Dorsolateral prefrontal cortex (tissue), 120 donors: ENCODE measurements at regions of chr6 and their contacts with region 1.

Region 1: DNA sequence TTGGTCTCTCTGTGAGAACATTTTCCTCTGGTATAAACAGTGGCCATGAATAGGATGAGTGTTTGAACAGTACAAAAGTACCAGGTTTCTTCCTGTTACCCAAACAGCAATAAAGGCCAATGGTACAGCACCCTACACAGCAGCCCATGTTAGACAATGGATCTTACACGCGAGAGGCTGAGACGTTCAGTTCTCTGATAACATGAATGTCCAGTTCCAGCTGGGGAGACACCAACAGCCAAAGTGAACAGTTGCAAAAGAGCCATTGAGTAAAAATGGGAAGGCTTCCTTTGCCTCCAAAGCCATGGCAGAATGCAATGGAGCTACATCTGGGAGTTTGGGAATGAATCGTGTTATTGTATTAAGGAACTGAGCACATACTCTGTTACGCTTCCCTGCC is 246.8 kb upstream of the SGK1 start:
- DNase-seq: peak; percentile 15 to 93 (median 75)
- H3K4me3 ChIP-seq: peak overlapping the region in 1 of 59 donors; percentile 30
- H3K27ac ChIP-seq: peak overlapping the region; percentile 49 to 100 (median 97)
- H3K27me3 ChIP-seq: no peaks in the 10 kb centered on the region
- CTCF ChIP-seq: peak in 3 of 56 donors; percentile 10 to 26 (median 19)

Region 2: GRCh38 chr6:134317471-134318131 is 247.1 kb before region 1 on chr6 and contains the start of gene SGK1:
- intact Hi-C with region 1: loop called (anchors 5 to 10 kb)
- DNase-seq: peak in 9 of 10 donors; percentile 41 to 70 (median 67)
- H3K4me3 ChIP-seq: peak within 1 kb of the TSS; percentile 57 to 95 (median 79)
- H3K27ac ChIP-seq: peak within 1 kb of the TSS; percentile 87 to 99 (median 96)
- H3K27me3 ChIP-seq: no peaks in the 10 kb centered on the region
- CTCF ChIP-seq: peak in 23 of 56 donors; percentile 5 to 45 (median 23)
- total RNA-seq, gene SGK1: 31.4 to 701 (median 120) TPM

Region 3: DNA sequence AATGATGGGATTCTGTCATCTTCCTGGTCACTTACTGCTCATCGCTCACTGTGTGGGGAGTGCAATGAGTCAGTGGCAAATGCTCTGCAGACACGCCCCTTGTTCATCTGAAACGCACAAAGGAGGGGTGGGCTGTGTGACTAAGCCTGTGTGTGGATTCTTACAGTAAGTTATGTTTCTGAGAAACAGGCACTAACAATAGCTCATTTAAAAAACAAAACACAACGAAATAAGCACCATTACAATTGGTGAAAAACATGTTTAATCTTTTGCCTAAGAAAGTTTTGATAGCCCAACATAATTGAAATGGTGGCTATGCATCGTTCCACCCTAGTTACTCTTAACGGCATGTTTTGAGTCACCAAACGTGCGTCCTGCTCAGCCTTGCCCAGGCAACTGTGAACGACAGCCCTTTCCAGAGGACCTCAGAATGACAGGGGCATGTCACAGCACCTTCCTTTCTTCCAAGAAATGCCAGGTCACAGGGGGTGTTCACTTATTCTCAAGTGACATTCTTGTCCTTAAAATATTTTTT is 128.4 kb before region 1 on chr6:
- intact Hi-C with region 1: loop called (anchors 2 to 10 kb)
- DNase-seq: peak in 9 of 10 donors; percentile 48 to 88 (median 79)
- H3K4me3 ChIP-seq: peak overlapping the region in 36 of 59 donors; percentile 0 to 50 (median 18)
- H3K27ac ChIP-seq: peak overlapping the region; percentile 22 to 98 (median 89)
- H3K27me3 ChIP-seq: no peaks in the 10 kb centered on the region
- CTCF ChIP-seq: peak in 4 of 56 donors; percentile 9 to 22 (median 18)

Region 4: DNA sequence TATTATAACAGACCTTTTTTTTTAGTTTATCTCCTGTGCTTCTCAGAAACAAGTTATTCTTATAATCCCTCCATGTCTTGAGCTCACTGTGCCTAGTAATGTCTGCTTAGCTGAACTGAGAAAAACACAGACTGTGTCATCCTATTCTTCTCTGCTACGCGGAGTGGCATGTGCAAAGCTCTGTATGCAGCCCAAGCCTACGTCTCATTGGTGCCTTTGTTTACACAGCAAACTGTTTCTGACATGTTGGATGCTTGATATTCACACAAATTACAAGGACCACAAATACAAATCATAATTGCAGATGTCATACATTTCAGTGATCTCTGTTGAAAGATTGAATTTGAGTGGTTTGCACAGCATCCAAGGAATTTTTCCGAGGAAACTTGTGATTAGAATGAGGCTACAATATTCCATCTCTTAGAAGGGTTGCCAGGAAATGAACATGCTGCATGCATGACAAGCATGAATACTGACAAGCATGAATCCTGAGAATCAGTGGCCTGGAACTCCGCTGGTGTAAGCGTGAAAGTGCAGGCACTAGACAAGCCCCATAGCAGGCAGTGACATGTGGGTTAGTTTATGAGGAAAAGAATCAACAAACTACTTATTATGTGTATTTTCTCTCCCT is 118.4 kb before region 1 on chr6:
- intact Hi-C with region 1: loop called in 1 of 2 experiments (anchors 10 kb)
- DNase-seq: peak in 2 of 10 donors; percentile 56 to 66
- H3K4me3 ChIP-seq: peak overlapping the region in 10 of 59 donors; percentile 0 to 35 (median 5)
- H3K27ac ChIP-seq: peak overlapping the region; percentile 9 to 97 (median 89)
- H3K27me3 ChIP-seq: no peaks in the 10 kb centered on the region
- CTCF ChIP-seq: peak in 9 of 56 donors; percentile 9 to 32 (median 16)

Region 5: DNA sequence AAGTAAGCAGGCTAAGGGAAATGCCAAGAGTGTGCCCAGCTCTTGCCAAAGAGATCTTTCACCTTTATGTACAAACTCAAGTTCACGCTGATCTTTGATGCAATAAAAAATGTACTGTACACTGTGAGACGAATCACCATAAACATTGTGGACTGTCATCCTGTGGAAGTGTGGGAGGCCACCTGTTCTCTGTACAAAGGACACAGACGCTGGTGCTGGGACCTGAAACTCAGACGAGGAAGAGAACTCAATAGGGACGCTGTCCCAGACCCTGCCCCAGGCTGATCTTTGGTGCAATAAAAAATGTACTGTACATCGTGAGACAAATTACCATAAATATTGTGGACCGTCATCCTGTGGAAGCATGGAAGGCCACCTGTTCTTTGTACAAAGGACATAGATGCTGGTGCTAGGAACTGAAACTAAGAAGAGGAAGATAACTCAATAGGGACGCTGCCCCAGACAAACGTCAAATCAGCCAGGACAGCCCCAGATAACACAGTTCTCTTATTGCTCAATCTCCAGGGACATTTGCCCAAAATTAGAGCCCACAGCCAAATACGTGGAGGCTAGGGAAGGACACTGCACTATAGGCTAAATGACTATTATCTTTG is 65.9 kb after region 1 on chr6:
- intact Hi-C with region 1: loop called in 1 of 2 experiments (anchors 5 kb)
- DNase-seq: no peak
- H3K4me3 ChIP-seq: peak overlapping the region in 27 of 59 donors; percentile 1 to 49 (median 15)
- H3K27ac ChIP-seq: peak overlapping the region; percentile 35 to 95 (median 85)
- H3K27me3 ChIP-seq: no peaks in the 10 kb centered on the region
- CTCF ChIP-seq: no peak

Region 6: GRCh38 chr6:134640975-134641429 is 76.3 kb after region 1 on chr6:
- intact Hi-C with region 1: loop called in 1 of 2 experiments (anchors 5 kb)
- DNase-seq: peak; percentile 58 to 93 (median 81)
- H3K4me3 ChIP-seq: no peak overlapping the region
- H3K27ac ChIP-seq: peak overlapping the region in 58 of 59 donors; percentile 40 to 91 (median 79)
- H3K27me3 ChIP-seq: no peaks in the 10 kb centered on the region
- CTCF ChIP-seq: peak; percentile 81 to 98 (median 94)